H1 (cell line): ENCODE measurements at regions of chr6 and their contacts with region 1.

Region 1: GRCh38 chr6:26156076-26156849 is 69.0 kb downstream of the HFE start:
- DNase-seq: peak; percentile 67 to 95
- H3K4me3 ChIP-seq: peak overlapping the region; percentile 90 to 100 (median 92)
- H3K27ac ChIP-seq: peak overlapping the region; percentile 97
- H3K4me1 ChIP-seq: peaks cover 0 to 3% (median 3%) of the 10 kb centered on the region in 4 experiments; a peak in 5 of 7 replicates
- H3K27me3 ChIP-seq: no peaks in the 10 kb centered on the region
- CTCF ChIP-seq: no peak
- EP300 ChIP-seq: no peak
- POLR2A ChIP-seq: peak; percentile 87 to 97
- RAD21 ChIP-seq: 0 out of 4 replicates have a peak, but pooled peaks have one; percentile 2 to 9

Region 2: GRCh38 chr6:26045065-26045927 is 111.0 kb before region 1 on chr6:
- CTCF ChIA-PET with region 1: no interaction called
- POLR2A ChIA-PET with region 1: interaction called, 61 read pairs
- DNase-seq: no peak
- H3K4me3 ChIP-seq: no peak overlapping the region
- H3K27ac ChIP-seq: 0 out of 2 replicates have a peak overlapping the region, but pooled peaks have one; percentile 22
- H3K4me1 ChIP-seq: peaks cover 0 to 6% (median under 1%) of the 10 kb centered on the region in 4 experiments; a peak in 1 of 7 replicates
- H3K27me3 ChIP-seq: no peaks in the 10 kb centered on the region
- CTCF ChIP-seq: peak in 1 of 3 experiments; percentile 1; a peak in 1 of 4 replicates
- EP300 ChIP-seq: no peak
- POLR2A ChIP-seq: no peak
- RAD21 ChIP-seq: no peak

Region 3: GRCh38 chr6:26175428-26176181 is 19.3 kb after region 1 on chr6:
- CTCF ChIA-PET with region 1: interaction called, 5 read pairs
- POLR2A ChIA-PET with region 1: interaction called, 218 read pairs
- DNase-seq: peak in 1 of 2 experiments; percentile 54
- H3K4me3 ChIP-seq: 0 out of 8 replicates have a peak overlapping the region, but pooled peaks of 1 of the 4 experiments have one; percentile 14
- H3K27ac ChIP-seq: no peak overlapping the region
- H3K4me1 ChIP-seq: peaks cover 0 to 2% (median 0%) of the 10 kb centered on the region in 4 experiments; a peak in 3 of 7 replicates
- H3K27me3 ChIP-seq: no peaks in the 10 kb centered on the region
- CTCF ChIP-seq: peak in 2 of 3 experiments; percentile 51 to 65; a peak in 2 of 4 replicates
- EP300 ChIP-seq: no peak
- POLR2A ChIP-seq: no peak
- RAD21 ChIP-seq: peak; percentile 79 to 83

Region 4: DNA sequence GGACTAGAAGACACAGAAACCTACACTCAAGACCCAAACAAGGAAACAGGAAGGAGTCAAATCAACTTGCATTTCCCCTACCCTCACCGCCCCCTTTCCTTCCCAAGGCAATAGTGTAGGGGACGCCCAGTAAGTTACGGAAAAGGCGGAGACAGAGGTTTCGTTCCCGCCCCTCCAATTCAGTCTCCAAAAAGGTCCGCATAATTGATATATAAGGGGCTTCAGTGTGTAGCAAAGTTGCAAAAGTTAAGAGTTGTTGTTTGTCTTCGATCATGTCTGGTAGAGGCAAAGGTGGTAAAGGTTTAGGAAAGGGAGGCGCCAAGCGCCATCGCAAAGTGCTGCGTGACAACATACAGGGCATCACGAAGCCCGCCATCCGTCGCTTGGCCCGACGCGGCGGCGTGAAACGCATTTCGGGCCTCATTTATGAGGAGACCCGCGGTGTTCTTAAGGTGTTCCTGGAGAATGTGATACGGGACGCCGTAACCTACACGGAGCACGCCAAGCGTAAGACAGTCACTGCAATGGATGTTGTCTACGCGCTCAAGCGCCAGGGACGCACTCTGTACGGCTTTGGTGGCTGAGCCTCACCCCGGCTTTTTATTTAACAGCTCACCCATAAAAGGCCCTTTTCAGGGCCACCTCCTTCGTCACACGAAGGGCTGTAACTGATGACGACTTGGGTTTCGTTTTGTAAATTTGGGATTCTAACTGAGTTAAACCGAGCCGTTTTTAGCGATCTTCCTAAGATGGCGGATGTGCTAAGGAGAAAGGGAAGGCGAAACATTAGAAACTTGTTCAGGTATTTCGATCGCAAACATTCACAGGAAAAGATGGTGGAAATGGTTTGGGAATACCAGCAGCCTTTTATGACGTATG is 84.1 kb after region 1 on chr6:
- CTCF ChIA-PET with region 1: no interaction called
- POLR2A ChIA-PET with region 1: interaction called, 122 read pairs
- DNase-seq: peak in 1 of 2 experiments; percentile 78
- H3K4me3 ChIP-seq: peak overlapping the region; percentile 64 to 96 (median 87)
- H3K27ac ChIP-seq: peak overlapping the region; percentile 96
- H3K4me1 ChIP-seq: peaks cover 1 to 8% (median 4%) of the 10 kb centered on the region in 4 experiments; a peak in 6 of 7 replicates
- H3K27me3 ChIP-seq: no peaks in the 10 kb centered on the region
- CTCF ChIP-seq: no peak
- EP300 ChIP-seq: peak in 1 of 2 experiments; percentile 87; a peak in 1 of 3 replicates
- POLR2A ChIP-seq: peak; percentile 100
- RAD21 ChIP-seq: no peak

Region 5: GRCh38 chr6:26295691-26296555 is 139.7 kb after region 1 on chr6:
- CTCF ChIA-PET with region 1: no interaction called
- POLR2A ChIA-PET with region 1: interaction called, 13 read pairs
- DNase-seq: no peak
- H3K4me3 ChIP-seq: no peak overlapping the region
- H3K27ac ChIP-seq: no peak overlapping the region
- H3K4me1 ChIP-seq: peaks cover 0 to 4% (median 0%) of the 10 kb centered on the region in 4 experiments; a peak in 1 of 7 replicates
- H3K27me3 ChIP-seq: peaks cover 0 to 1% (median 0%) of the 10 kb centered on the region in 4 experiments; a peak in 1 of 7 replicates
- CTCF ChIP-seq: no peak
- EP300 ChIP-seq: no peak
- POLR2A ChIP-seq: no peak
- RAD21 ChIP-seq: no peak

Region 6: DNA sequence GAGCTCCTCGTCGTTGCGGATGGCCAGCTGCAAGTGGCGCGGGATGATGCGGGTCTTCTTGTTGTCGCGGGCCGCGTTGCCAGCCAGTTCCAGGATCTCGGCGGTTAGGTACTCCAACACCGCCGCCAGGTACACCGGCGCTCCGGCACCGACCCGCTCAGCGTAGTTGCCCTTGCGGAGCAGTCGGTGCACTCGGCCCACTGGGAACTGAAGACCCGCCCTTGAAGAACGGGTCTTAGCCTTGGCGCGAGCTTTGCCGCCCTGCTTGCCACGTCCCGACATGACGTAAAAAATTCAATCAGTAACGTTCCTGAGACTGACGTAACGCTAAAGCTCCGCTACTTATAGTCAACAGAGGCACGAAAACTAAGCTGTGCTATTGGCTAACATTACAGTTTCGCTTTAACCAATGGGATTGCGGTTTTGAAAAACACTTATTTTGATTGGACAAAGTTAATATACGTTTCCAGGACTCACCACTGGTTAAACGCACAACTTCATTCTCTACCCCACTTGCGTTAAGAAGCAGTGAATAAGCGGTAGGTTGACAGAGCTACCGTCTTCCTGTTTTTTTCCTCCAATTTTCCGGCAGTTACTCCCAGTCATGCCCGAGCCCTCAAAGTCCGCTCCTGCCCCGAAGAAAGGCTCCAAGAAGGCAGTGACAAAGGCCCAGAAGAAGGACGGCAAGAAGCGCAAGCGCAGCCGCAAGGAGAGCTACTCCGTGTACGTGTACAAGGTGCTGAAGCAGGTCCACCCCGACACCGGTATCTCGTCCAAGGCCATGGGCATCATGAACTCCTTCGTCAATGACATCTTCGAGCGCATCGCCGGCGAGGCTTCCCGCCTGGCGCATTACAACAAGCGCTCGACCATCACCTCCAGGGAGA is 1682.0 kb after region 1 on chr6:
- CTCF ChIA-PET with region 1: no interaction called
- POLR2A ChIA-PET with region 1: interaction called, 20 read pairs
- DNase-seq: peak; percentile 76 to 87
- H3K4me3 ChIP-seq: peak overlapping the region; percentile 77 to 96 (median 93)
- H3K27ac ChIP-seq: peak overlapping the region; percentile 98
- H3K4me1 ChIP-seq: peaks cover 0 to 5% (median 2%) of the 10 kb centered on the region in 4 experiments; a peak in 1 of 7 replicates
- H3K27me3 ChIP-seq: no peaks in the 10 kb centered on the region
- CTCF ChIP-seq: no peak
- EP300 ChIP-seq: no peak
- POLR2A ChIP-seq: peak; percentile 88 to 91
- RAD21 ChIP-seq: no peak